OCI-LY7 (cell line): ENCODE measurements at regions of chr12 and their contacts with region 1.

Region 1: DNA sequence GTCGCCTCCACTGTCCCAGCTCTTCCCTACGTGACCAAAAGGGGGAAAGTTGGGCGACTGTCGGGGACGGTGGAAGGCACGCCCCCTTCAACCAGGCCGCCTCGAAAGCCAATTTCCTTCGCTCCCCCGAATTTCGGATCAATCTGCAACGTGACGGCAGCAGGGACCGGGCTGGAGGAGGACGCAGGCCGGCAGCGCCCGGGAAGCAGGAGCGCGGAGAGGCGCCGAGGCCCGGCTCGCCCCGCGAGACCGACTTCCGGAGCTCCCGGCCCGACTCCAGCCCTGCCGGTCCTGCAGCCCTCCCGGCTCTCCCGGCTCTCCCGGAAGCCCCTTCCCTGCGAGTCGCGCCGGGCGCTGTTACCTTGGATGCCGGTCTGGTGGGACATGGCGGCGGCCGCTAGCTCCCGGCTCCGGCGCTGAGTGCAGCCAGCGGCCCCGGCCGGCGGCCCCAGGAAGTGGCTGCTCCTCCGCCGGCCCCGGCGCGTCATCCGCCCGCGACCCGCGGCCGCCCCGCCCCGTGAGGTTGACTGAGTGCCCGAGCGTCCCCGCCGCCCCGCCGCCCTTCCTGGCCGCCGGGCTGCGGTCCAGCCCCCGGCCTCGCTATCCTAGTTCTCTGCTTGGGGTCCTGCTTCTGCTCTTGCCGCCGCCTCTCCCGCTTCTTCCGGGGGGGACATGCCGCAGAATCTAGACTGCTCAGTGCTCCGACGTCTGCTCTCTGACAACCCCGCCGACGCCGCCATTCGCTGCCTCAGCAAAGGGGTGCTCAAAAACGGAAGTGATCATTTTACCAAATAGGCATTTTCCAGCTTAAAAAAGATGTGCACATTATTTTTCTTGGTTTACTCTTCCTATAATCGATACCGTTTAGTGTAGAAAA is at the start of gene TWF1:
- DNase-seq: peak; percentile 81
- H3K4me3 ChIP-seq: peak within 1 kb of the TSS; percentile 92
- H3K27ac ChIP-seq: peak within 1 kb of the TSS; percentile 90
- H3K4me1 ChIP-seq: peaks cover 36% of the 10 kb centered on the region
- CTCF ChIP-seq: no peak
- total RNA-seq, gene TWF1: 20.6 and 29.4 TPM in 2 replicates

Region 2: DNA sequence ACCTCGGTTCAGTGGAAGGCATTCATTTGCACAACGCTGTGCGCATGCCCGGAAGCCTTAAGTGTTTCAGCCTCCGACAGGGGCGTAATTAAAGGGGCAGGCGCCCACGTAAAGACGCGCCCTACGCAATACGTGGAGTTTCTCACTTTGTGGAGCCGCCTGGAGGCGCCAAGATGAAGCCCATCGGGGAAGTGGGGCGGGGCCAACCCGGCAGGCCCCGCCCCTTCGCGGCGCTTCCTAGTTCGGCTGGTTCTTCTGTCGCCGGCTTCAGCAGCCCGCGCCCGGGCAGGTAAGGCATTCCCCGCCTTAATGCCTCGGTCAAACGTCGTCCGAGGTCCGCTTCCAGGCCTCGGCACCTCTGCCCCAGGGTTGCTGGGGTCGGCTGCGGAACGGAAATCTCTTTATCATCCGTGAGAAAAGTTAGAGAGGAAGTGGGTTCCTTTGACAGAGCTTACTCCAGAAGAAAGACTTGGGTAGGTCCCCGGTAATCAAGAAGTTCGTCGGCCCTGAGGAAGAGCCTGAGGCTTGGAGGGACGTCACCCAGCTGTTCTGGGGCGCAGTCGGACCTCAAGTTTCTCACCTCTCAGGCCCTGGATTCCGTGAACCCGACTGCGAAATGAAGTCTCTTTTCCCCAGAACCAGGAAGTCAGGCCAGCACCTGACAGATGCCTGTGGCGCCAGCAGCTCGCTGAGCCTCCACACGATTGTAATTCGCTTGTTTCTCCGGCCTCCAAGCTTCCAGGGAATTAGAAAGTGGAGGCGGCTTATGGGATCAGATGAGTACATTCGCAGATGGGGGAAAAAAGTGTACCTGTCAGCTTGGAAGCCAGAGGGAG is 47.2 kb before region 1 on chr12 and contains the starts of genes IRAK4 and PUS7L:
- CTCF ChIA-PET with region 1: no interaction called
- POLR2A ChIA-PET with region 1: interaction called, 27 read pairs
- intact Hi-C with region 1: loop called (anchors 2 kb)
- DNase-seq: peak; percentile 99
- H3K4me3 ChIP-seq: peak within 1 kb of the TSS; percentile 76
- H3K27ac ChIP-seq: peak within 1 kb of the TSS; percentile 88
- H3K4me1 ChIP-seq: peaks cover 40% of the 10 kb centered on the region
- CTCF ChIP-seq: peak; percentile 43
- total RNA-seq, gene IRAK4: 17.3 and 17.9 TPM in 2 replicates
- total RNA-seq, gene PUS7L: 20.5 and 21.1 TPM in 2 replicates

Region 3: DNA sequence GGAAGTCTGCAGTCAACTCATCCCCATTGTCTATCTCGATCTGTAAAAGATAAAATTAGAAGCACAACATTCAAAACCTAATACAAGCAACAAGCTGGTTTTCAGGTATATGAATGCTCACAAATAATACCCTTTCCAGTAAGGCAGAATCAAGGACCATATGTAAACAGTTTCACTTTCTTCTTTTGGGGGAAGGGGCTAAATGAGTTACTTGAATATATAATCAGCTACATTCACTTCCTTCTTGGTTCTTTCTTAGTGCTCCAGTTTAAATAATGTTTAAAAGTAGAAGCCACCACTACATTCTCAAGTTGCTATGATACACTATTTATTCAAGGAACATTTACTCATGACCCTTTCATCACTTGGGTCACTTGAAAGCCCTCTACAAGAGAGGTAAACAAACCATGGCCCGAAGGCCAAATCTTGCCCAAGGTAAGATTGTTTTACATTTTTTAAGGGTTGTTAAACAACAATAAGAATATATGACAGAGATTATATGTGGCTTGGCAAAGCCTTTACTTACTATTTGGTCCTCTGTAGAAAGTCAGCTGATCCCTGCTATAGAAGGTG is 10.3 kb before region 1 on chr12:
- CTCF ChIA-PET with region 1: interaction called, 3 read pairs
- POLR2A ChIA-PET with region 1: interaction called, 27 read pairs
- intact Hi-C with region 1: no loop called
- DNase-seq: no peak
- H3K4me3 ChIP-seq: no peak overlapping the region
- H3K27ac ChIP-seq: no peak overlapping the region
- H3K4me1 ChIP-seq: no peaks in the 10 kb centered on the region
- CTCF ChIP-seq: no peak

Region 4: GRCh38 chr12:43816168-43816567 is 10.1 kb after region 1 on chr12:
- CTCF ChIA-PET with region 1: no interaction called
- POLR2A ChIA-PET with region 1: interaction called, 29 read pairs
- intact Hi-C with region 1: no loop called
- DNase-seq: no peak
- H3K4me3 ChIP-seq: no peak overlapping the region
- H3K27ac ChIP-seq: no peak overlapping the region
- H3K4me1 ChIP-seq: no peaks in the 10 kb centered on the region
- CTCF ChIP-seq: no peak

Region 5: DNA sequence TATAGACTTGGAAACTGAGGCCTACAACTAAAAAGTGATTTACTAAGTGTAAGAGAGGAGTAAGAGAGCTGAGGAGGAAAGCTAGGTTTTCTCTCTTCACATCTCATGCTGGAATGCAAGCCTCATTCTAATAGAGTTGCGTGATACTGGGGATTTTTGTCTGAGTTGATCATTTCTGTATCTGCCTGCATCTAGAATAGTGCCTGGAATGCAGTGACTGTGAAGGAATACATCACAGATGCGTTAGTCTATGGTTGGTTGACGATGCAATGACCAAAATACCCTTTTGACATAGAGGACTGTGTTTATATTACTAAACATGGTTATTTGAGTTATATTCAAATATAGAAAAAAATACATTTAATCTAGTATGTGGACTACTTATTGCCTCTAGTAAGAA is 20.6 kb after region 1 on chr12:
- CTCF ChIA-PET with region 1: no interaction called
- POLR2A ChIA-PET with region 1: interaction called, 14 read pairs
- intact Hi-C with region 1: no loop called
- DNase-seq: no peak
- H3K4me3 ChIP-seq: no peak overlapping the region
- H3K27ac ChIP-seq: no peak overlapping the region
- H3K4me1 ChIP-seq: no peaks in the 10 kb centered on the region
- CTCF ChIP-seq: no peak

Region 6: DNA sequence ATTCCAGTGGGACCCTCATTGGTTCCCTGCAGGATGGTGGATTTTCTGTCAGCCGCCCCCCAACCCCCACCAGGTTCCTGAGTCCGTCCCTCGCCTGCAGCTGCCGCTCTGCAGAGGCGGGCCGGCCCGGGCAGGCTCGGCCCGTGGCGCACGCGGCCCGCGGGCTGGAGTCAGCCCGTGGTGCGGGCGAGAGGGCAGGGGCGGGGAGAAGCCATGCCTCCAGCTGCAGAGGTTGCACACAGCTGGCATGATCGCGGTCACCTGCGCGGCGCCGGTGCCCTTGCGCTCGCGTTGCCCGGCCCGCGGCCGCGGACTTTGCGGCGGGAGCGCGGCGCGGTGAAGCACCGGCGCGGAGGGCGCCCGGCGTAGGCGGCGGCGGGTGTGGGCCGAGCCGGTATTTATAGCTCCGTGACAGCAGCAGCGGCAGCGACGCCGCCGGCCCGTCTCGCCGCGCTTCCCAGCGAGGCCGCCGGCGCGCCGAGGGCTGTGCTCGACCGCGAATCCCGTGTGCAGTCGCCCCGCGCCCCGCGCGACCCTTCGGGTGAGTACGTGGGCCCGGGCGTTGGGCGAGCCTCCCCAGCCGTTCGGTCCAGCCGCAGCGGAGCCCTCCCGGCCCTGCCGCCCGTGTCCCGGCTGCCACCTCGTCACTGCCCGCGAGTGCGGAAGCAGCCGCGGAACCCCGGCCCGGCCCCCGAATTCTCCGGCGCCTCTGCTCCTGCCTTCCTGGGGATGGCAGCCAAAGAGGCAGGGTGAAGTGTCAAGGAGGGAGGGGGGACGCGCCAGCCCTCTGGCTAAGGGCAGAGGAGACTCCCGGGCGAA is 29.8 kb after region 1 on chr12 and contains the start of gene TMEM117:
- CTCF ChIA-PET with region 1: interaction called, 3 read pairs
- POLR2A ChIA-PET with region 1: interaction called, 42 read pairs
- intact Hi-C with region 1: loop called (anchors 1 kb)
- DNase-seq: peak; percentile 61
- H3K4me3 ChIP-seq: peak within 1 kb of the TSS; percentile 83
- H3K27ac ChIP-seq: peak within 1 kb of the TSS; percentile 28
- H3K4me1 ChIP-seq: peaks cover 14% of the 10 kb centered on the region
- CTCF ChIP-seq: no peak
- total RNA-seq, gene TMEM117: 0.95 and 2.3 TPM in 2 replicates

Region 7: GRCh38 chr12:44021471-44021971 is 215.4 kb after region 1 on chr12:
- CTCF ChIA-PET with region 1: no interaction called
- POLR2A ChIA-PET with region 1: no interaction called
- intact Hi-C with region 1: no loop called
- DNase-seq: no peak
- H3K4me3 ChIP-seq: no peak overlapping the region
- H3K27ac ChIP-seq: no peak overlapping the region
- H3K4me1 ChIP-seq: no peaks in the 10 kb centered on the region
- CTCF ChIP-seq: no peak